ENCODE measurements at regions of chr9 and their contacts with region 1.

Region 1: GRCh38 chr9:121267689-121268597 is at the start of gene GSN:
- DNase-seq: peak; percentile 84
- ATAC-seq: peak; percentile 77
- H3K4me3 Mint-ChIP-seq: peak within 1 kb of the TSS; percentile 83
- H3K27ac Mint-ChIP-seq: peak within 1 kb of the TSS; percentile 41
- H3K4me1 Mint-ChIP-seq: peaks cover 51% of the 10 kb centered on the region
- H3K27me3 Mint-ChIP-seq: peaks cover 57% of the 10 kb centered on the region
- CTCF ChIP-seq: no peak
- total RNA-seq, gene GSN: 47.0 to 57.3 TPM (median 54.9 TPM) in 3 replicates

Region 2: GRCh38 chr9:121253821-121254471 is 14.0 kb before region 1 on chr9:
- CTCF ChIA-PET with region 1: interaction called, 10 read pairs
- POLR2A ChIA-PET with region 1: interaction called, 6 read pairs
- DNase-seq: no peak
- ATAC-seq: peak; percentile 97
- H3K4me3 Mint-ChIP-seq: peak overlapping the region; percentile 8
- H3K27ac Mint-ChIP-seq: peak overlapping the region; percentile 21; the same call in 1 of the 2 replicates
- H3K4me1 Mint-ChIP-seq: peaks cover 13% of the 10 kb centered on the region
- H3K27me3 Mint-ChIP-seq: peaks cover 34% of the 10 kb centered on the region
- CTCF ChIP-seq: no peak